Sciatic nerve (tissue), 2 donors: ENCODE measurements at regions of chr13 and their contacts with region 1.

Region 1: DNA sequence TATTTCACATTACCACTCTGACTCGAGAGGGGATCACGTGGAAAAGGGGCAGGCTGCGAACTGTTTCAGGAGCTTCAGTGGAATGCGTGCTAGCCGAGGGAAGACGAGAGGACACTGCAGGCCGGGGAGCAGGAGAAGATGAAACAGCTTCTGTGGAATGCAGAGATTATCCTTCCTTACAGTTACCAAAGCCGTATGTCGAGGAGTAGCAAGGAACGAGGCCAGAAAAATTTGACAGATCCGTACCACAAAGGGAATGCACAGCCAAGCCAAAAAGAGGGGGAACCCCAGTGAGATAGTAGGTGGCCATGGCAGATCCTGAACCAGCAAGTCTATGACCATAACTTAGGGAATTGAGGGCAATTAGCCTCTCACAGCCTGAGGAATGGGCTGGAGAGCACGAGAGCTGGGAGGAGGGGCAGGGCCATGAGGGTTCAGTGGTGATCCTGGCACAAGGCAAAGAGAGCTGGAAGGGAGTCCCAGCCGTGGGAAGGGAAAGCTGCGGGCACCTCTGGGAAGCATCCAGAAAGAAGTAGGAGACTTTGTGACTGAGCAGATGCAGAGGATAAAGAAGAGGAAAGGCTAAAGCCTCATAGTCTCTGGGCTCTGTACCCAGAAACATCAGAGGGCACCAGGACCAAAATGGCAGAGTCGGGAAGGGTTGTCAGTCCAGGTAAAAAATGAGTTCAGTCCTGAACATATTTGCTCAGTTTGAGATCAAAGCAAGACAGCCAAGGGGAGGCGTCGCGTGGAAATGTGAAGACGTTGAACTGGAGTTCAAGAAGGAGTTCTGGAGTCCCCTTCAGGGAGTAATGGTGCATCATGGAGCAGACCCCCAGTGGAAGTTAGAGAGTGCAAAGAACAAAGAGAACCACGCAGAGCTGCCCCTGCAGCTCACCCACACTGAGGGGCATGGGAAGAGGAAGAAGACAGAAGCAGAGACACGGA is 5.1 kb downstream of the COL4A1 start:
- DNase-seq: no peak
- ATAC-seq: no peak

Region 2: GRCh38 chr13:110070511-110071120 is 231.3 kb before region 1 on chr13:
- intact Hi-C with region 1: no loop called
- DNase-seq: no peak
- ATAC-seq: no peak

Region 3: DNA sequence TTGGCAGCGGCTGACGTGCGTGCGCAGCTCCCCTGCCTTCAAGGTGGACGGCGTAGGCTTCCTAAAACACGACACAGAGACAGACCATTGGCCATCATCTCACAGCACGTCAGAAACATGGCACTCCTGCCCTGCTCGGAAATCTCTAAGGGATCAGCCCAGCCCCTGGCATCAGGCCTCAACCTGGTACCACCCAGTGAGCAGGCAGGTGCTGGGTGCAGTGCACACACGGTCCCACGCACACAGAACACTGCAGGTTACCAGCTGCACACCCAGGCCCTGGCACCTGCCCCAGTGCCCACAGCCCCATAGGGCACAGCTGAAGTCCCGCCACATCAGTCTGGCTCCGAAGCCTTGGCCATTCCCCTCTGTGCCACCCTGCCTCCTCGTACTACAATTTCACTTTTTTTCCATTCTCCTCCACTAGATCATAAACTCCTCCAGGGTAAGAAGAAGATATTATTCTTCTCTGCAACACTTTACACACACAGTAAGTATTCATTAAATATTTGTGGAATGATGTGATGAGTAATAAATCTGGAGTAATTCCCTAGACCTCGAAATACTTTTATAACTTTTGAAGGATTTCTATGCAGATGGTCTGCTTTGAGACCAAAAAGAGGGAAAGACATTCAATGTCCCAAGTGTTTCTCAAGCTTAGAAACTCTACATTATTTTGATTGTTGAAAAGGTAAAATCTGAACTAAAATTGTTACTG is 151.3 kb before region 1 on chr13:
- intact Hi-C with region 1: no loop called
- DNase-seq: no peak
- ATAC-seq: peak; percentile 39

Region 4: DNA sequence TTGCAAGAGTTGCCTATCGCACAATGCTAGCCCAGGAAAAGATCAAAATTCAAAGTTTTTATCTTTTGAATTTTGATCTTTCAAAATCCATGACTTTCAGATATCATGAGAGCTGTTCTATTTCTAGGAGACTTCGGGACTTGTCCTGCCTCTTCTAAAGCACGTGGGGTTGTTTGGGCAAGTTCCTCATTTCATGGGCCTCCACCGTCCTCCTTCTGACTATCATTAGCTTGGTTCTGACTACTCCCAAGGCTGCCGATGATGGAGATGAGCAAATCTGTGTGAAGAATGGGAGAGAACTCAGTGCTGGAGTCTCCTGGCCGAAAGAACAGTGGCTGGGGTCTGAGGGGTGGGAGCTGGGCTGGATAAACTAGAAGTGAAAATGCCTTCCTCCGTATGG is 81.4 kb before region 1 on chr13:
- intact Hi-C with region 1: loop called (anchors 1 kb)
- DNase-seq: no peak
- ATAC-seq: no peak

Region 5: GRCh38 chr13:110323172-110323891 is 21.5 kb after region 1 on chr13:
- intact Hi-C with region 1: no loop called
- DNase-seq: no peak
- ATAC-seq: no peak